GM12878 (cell line): ENCODE measurements at regions of chr4 and their contacts with region 1.

Region 1: GRCh38 chr4:26372525-26373172 is 51.8 kb downstream of the RBPJ start:
- DNase-seq: peak; percentile 83
- ATAC-seq: peak; percentile 93
- H3K4me3 ChIP-seq: no peak overlapping the region
- H3K27ac ChIP-seq: no peak overlapping the region
- H3K4me1 ChIP-seq: peaks cover 15% of the 10 kb centered on the region
- H3K27me3 ChIP-seq: no peaks in the 10 kb centered on the region
- CTCF ChIP-seq: no peak
- EP300 ChIP-seq: peak; percentile 27 to 47; a peak in 1 of 4 replicates
- POLR2A ChIP-seq: no peak
- RAD21 ChIP-seq: no peak

Region 2: GRCh38 chr4:26360864-26361263 is 11.8 kb before region 1 on chr4:
- CTCF ChIA-PET with region 1: interaction called, 5 read pairs
- POLR2A ChIA-PET with region 1: interaction called, 4 read pairs
- RAD21 ChIA-PET with region 1: no interaction called
- SMC1A ChIA-PET with region 1: interaction called, 12 read pairs
- in situ Hi-C with region 1: no loop called
- intact Hi-C with region 1: no loop called
- DNase-seq: no peak
- ATAC-seq: no peak; the same call in 2 of the 3 replicates
- H3K4me3 ChIP-seq: no peak overlapping the region
- H3K27ac ChIP-seq: no peak overlapping the region
- H3K4me1 ChIP-seq: peaks cover 11% of the 10 kb centered on the region
- H3K27me3 ChIP-seq: no peaks in the 10 kb centered on the region
- CTCF ChIP-seq: no peak
- EP300 ChIP-seq: no peak
- POLR2A ChIP-seq: no peak
- RAD21 ChIP-seq: no peak